ENCODE measurements at regions of chr3 and their contacts with region 1.

Region 1: DNA sequence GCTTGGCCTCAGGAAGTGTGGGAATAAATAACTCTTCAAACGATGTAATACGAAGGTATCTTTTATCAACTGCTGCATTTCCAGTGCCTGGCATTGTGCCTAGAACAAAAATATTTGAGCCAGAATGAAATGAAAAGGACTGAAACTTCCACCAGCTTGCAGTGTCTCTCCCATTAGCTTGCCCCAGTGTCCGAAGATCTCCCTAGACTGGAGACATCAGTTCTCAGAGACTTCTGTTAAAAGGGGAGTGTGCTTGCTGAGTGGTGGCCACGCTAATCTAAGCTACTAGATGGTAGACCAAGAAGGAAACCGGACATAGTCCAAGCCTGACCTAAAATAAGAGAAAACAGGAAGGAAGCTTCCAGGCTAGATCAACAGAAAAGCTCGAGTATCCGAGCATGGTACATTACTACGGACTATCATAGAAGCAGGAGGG is 28.6 kb downstream of the KCNAB1 start:
- DNase-seq: no peak
- ATAC-seq: peak; percentile 32
- H3K4me3 ChIP-seq: peak overlapping the region; percentile 12
- H3K27ac ChIP-seq: peak overlapping the region; percentile 20
- H3K4me1 ChIP-seq: peaks cover 13% of the 10 kb centered on the region
- H3K27me3 ChIP-seq: no peaks in the 10 kb centered on the region
- CTCF ChIP-seq: no peak

Region 2: DNA sequence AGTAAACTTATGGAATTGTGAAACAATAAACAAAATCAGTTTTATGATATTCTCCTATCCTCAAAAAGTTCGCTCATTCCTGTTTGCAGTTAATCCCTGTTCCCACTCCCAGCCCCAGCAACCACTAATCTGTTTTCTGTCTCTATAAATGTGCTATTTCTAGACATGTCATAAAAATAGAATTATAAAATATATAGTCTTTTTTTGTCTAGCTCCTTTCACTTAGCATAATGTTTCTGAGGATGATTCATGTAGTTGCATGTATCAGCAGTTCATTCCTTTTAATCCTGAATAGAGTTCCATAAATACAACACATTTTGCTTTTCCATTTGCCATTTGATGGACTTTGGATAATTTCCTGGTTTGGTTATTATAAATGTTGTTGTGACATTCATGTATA is 111.4 kb after region 1 on chr3:
- intact Hi-C with region 1: no loop called
- DNase-seq: no peak
- ATAC-seq: no peak
- H3K4me3 ChIP-seq: no peak overlapping the region
- H3K27ac ChIP-seq: no peak overlapping the region
- H3K4me1 ChIP-seq: no peaks in the 10 kb centered on the region
- H3K27me3 ChIP-seq: no peaks in the 10 kb centered on the region
- CTCF ChIP-seq: no peak

Region 3: GRCh38 chr3:156509189-156510174 is 360.5 kb after region 1 on chr3:
- intact Hi-C with region 1: loop called (anchors 10 kb)
- DNase-seq: no peak
- ATAC-seq: peak; percentile 80
- H3K4me3 ChIP-seq: no peak overlapping the region
- H3K27ac ChIP-seq: no peak overlapping the region
- H3K4me1 ChIP-seq: no peaks in the 10 kb centered on the region
- H3K27me3 ChIP-seq: no peaks in the 10 kb centered on the region
- CTCF ChIP-seq: peak; percentile 64

Region 4: GRCh38 chr3:156787926-156788663 is 639.1 kb after region 1 on chr3:
- intact Hi-C with region 1: no loop called
- DNase-seq: no peak
- ATAC-seq: no peak
- H3K4me3 ChIP-seq: no peak overlapping the region
- H3K27ac ChIP-seq: no peak overlapping the region
- H3K4me1 ChIP-seq: peaks cover 5% of the 10 kb centered on the region
- H3K27me3 ChIP-seq: no peaks in the 10 kb centered on the region
- CTCF ChIP-seq: no peak